IMR-90 (cell line): ENCODE measurements at regions of chr1 and their contacts with region 1.

Region 1: DNA sequence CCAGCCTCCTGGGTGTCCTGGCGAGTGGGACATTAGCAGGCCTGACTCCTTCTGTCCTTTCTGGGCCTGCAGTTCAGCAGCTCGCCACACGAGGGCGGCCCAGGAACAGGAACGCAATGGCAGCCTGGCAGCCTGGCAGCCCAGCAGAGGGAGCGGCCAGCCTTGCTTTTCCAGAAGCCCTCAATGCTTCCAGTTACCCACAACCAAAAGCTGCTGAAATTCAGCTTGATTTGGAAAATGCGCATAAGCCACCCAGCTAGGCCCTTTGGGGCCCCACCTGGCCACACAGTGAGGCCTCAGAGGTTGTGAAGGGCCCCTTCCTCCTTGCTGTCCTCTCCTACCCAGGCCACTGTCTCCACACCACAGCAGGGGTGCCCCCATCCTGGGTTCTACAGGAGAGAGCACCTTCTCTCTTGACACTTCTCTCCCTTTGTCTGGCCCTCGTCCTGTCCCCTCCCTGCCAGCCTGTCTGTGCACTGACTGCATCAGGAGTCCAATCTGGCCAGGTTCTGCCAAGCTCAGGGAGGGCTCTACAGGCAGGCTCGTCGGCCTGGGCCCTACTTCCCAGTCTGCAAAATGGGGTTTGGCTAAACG is 103.4 kb upstream of the VAMP3 start:
- DNase-seq: peak; percentile 72
- ATAC-seq: peak; percentile 95
- H3K4me3 ChIP-seq: no peak overlapping the region
- H3K27ac ChIP-seq: no peak overlapping the region
- H3K4me1 ChIP-seq: no peaks in the 10 kb centered on the region; the same call in 1 of the 2 replicates
- H3K27me3 ChIP-seq: peaks cover 16% of the 10 kb centered on the region
- CTCF ChIP-seq: peak; percentile 100
- POLR2A ChIP-seq: peak; percentile 55; the same call in 1 of the 2 replicates
- RAD21 ChIP-seq: peak; percentile 100

Region 2: GRCh38 chr1:7747605-7748004 is 79.9 kb after region 1 on chr1:
- CTCF ChIA-PET with region 1: interaction called, 108 read pairs
- POLR2A ChIA-PET with region 1: no interaction called
- dilution Hi-C with region 1: no loop called
- in situ Hi-C with region 1: loop called (anchors 5 kb)
- intact Hi-C with region 1: loop called (anchors 1 kb)
- DNase-seq: no peak
- ATAC-seq: no peak
- H3K4me3 ChIP-seq: no peak overlapping the region
- H3K27ac ChIP-seq: no peak overlapping the region
- H3K4me1 ChIP-seq: peaks cover 4% of the 10 kb centered on the region; the same call in 1 of the 2 replicates
- H3K27me3 ChIP-seq: peaks cover 12% of the 10 kb centered on the region
- CTCF ChIP-seq: no peak
- POLR2A ChIP-seq: no peak
- RAD21 ChIP-seq: no peak

Region 3: DNA sequence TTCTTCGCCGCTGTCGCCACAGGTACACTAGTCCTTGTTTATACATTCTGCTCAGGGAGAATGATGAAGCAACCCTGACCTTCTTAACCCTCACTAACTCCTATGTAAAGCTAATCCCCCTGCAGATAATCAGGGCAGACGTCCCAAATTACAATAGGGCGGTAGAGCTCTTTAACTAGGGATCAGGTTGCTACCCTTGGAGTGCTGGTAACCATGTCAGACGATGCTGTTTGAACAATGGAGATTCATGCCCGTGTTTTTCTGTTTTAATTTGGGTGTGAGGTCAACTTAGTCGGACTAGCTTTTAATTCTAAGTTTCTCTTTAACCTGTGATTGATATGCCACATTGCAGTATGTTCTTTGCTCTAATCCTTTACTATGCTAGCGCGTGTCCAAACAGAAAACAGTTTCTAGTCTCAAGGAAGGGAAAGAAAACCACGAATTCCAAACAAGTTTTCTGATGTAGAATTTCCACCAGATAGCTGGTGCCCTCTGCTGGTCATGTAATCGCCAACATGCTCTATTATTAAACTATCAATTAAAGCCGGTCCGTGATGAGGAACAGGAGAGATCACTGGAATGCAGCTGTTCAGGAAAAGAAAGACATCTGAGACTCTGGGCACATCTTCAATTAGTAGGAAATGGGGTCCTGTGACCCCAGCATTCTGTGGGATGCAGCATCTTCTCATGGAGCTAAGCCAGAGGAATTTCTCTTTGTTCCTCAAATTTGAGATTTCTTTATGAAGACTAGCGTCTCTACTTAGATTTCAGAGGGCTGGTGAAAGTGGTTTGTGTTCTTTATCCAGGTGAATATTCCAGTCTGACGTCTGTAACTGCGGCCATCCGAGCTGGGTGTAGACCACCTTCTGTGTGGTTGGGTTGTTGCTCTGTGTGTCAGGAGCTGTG is 85.0 kb after region 1 on chr1:
- CTCF ChIA-PET with region 1: interaction called, 108 read pairs
- POLR2A ChIA-PET with region 1: no interaction called
- dilution Hi-C with region 1: no loop called
- in situ Hi-C with region 1: loop called (anchors 5 kb)
- intact Hi-C with region 1: loop called (anchors 1 kb)
- DNase-seq: peak; percentile 71
- ATAC-seq: peak; percentile 88
- H3K4me3 ChIP-seq: peak overlapping the region; percentile 83
- H3K27ac ChIP-seq: no peak overlapping the region
- H3K4me1 ChIP-seq: peaks cover 6% of the 10 kb centered on the region; the same call in 1 of the 2 replicates
- H3K27me3 ChIP-seq: peaks cover 20% of the 10 kb centered on the region
- CTCF ChIP-seq: peak; percentile 84
- POLR2A ChIP-seq: no peak
- RAD21 ChIP-seq: peak; percentile 80

Region 4: GRCh38 chr1:7795406-7795805 is 127.7 kb after region 1 on chr1:
- CTCF ChIA-PET with region 1: no interaction called
- POLR2A ChIA-PET with region 1: no interaction called
- dilution Hi-C with region 1: no loop called
- in situ Hi-C with region 1: no loop called
- intact Hi-C with region 1: no loop called
- DNase-seq: no peak
- ATAC-seq: no peak
- H3K4me3 ChIP-seq: no peak overlapping the region
- H3K27ac ChIP-seq: no peak overlapping the region
- H3K4me1 ChIP-seq: no peaks in the 10 kb centered on the region
- H3K27me3 ChIP-seq: no peaks in the 10 kb centered on the region
- CTCF ChIP-seq: no peak
- POLR2A ChIP-seq: no peak
- RAD21 ChIP-seq: no peak

Region 5: GRCh38 chr1:7902478-7903085 is 234.9 kb after region 1 on chr1:
- CTCF ChIA-PET with region 1: interaction called, 3 read pairs
- POLR2A ChIA-PET with region 1: no interaction called
- dilution Hi-C with region 1: no loop called
- in situ Hi-C with region 1: loop called (anchors 5 kb)
- intact Hi-C with region 1: loop called (anchors 1 kb)
- DNase-seq: peak; percentile 70
- ATAC-seq: peak; percentile 98
- H3K4me3 ChIP-seq: no peak overlapping the region
- H3K27ac ChIP-seq: no peak overlapping the region
- H3K4me1 ChIP-seq: no peaks in the 10 kb centered on the region
- H3K27me3 ChIP-seq: no peaks in the 10 kb centered on the region
- CTCF ChIP-seq: peak; percentile 79
- POLR2A ChIP-seq: no peak
- RAD21 ChIP-seq: peak; percentile 89

Region 6: DNA sequence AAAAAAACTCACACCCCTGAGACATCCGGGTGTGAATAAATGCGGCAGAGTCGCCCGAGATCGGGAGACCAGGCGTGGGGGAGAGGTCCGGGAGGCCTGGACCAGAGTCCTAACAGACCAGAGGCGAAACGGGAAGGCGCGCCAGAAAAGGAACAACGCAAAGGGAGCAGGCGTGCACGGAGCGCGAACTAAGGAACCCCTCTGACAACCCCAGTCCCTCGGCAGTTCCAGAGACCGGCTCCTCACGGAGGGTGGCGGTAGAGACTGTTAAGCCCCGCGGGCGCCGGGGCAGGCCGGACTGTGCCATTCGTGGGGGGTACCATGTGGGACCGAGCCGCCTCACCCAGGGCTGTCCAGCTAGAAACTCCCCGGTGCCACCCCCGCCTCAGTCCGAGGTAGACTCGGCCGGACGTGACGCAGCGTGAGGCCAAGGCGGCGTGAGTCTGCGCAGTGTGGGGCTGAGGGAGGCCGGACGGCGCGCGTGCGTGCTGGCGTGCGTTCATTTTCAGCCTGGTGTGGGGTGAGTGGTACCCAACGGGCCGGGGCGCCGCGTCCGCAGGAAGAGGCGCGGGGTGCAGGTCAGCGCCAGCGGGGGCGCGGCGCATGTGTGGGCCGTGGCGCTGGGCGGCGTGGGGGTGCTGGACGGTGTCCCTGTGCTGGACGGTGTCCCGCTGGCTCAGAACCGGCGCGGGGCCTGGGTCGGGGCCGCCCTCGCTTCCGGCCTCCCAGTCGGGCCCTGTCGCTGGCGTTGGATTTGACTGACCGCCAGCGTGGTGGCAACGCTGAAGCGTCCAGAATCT is 293.7 kb after region 1 on chr1 and contains the start of gene PARK7:
- CTCF ChIA-PET with region 1: no interaction called
- POLR2A ChIA-PET with region 1: no interaction called
- dilution Hi-C with region 1: no loop called
- in situ Hi-C with region 1: no loop called
- intact Hi-C with region 1: loop called (anchors 2 kb)
- DNase-seq: peak; percentile 99
- ATAC-seq: peak; percentile 99
- H3K4me3 ChIP-seq: peak within 1 kb of the TSS; percentile 79
- H3K27ac ChIP-seq: peak within 1 kb of the TSS; percentile 82
- H3K4me1 ChIP-seq: no peaks in the 10 kb centered on the region
- H3K27me3 ChIP-seq: no peaks in the 10 kb centered on the region
- CTCF ChIP-seq: peak; percentile 67
- POLR2A ChIP-seq: peak; percentile 98
- RAD21 ChIP-seq: peak; percentile 55
- total RNA-seq, gene PARK7: 207 and 384 TPM in 2 replicates

Region 7: DNA sequence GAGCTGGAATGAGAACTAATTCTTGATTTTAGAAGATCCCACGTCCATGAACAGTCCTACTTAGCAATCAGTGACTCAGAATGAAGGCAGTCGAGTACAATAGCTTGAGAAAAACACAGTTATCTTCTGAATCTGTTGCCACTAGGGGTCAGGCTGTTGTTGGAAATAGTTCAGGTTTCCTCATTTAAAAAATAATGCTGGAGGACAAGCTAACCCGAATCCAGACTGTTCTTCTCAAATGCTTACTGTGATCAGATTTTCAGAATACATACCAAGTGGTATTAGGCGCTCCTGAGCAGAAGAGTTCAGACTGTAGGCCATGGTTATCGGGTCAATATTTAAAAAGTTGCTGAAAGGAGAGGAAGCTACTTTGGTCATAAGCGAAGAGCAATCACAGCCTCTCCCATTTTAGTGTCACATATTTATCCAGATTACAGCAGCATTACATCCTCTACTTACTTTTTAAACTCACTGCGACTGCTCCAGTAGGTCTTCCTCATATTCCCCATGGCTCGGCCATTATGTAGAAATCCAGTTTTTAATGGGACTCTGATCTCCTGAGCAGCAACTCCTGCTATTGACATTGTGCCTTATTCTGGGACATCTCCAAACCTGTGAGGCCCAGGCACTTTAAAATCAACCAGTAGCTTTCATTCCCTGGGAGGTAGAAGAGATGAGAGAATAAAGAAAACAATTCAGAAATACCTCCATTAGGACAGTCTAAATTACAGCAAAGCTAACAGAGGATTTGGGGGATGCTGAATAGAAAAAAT is 347.5 kb after region 1 on chr1:
- CTCF ChIA-PET with region 1: no interaction called
- POLR2A ChIA-PET with region 1: no interaction called
- dilution Hi-C with region 1: no loop called
- in situ Hi-C with region 1: no loop called
- intact Hi-C with region 1: loop called (anchors 5 kb)
- DNase-seq: peak; percentile 89
- ATAC-seq: peak; percentile 73
- H3K4me3 ChIP-seq: no peak overlapping the region
- H3K27ac ChIP-seq: peak overlapping the region; percentile 58; the same call in 1 of the 2 replicates
- H3K4me1 ChIP-seq: peaks cover 20% of the 10 kb centered on the region
- H3K27me3 ChIP-seq: no peaks in the 10 kb centered on the region
- CTCF ChIP-seq: peak; percentile 70
- POLR2A ChIP-seq: peak; percentile 39
- RAD21 ChIP-seq: peak; percentile 64

Region 8: GRCh38 chr1:8314346-8315280 is 646.9 kb after region 1 on chr1:
- CTCF ChIA-PET with region 1: no interaction called
- POLR2A ChIA-PET with region 1: no interaction called
- dilution Hi-C with region 1: no loop called
- in situ Hi-C with region 1: loop called (anchors 25 kb)
- intact Hi-C with region 1: loop called (anchors 10 kb)
- DNase-seq: peak; percentile 77
- ATAC-seq: peak; percentile 86
- H3K4me3 ChIP-seq: no peak overlapping the region
- H3K27ac ChIP-seq: no peak overlapping the region; the same call in 1 of the 2 replicates
- H3K4me1 ChIP-seq: peaks cover 10% of the 10 kb centered on the region
- H3K27me3 ChIP-seq: no peaks in the 10 kb centered on the region
- CTCF ChIP-seq: peak; percentile 98
- POLR2A ChIP-seq: peak; percentile 70
- RAD21 ChIP-seq: peak; percentile 100